Left lung (tissue), 14 donors: ENCODE measurements at regions of chr10 and their contacts with region 1.

Region 1: DNA sequence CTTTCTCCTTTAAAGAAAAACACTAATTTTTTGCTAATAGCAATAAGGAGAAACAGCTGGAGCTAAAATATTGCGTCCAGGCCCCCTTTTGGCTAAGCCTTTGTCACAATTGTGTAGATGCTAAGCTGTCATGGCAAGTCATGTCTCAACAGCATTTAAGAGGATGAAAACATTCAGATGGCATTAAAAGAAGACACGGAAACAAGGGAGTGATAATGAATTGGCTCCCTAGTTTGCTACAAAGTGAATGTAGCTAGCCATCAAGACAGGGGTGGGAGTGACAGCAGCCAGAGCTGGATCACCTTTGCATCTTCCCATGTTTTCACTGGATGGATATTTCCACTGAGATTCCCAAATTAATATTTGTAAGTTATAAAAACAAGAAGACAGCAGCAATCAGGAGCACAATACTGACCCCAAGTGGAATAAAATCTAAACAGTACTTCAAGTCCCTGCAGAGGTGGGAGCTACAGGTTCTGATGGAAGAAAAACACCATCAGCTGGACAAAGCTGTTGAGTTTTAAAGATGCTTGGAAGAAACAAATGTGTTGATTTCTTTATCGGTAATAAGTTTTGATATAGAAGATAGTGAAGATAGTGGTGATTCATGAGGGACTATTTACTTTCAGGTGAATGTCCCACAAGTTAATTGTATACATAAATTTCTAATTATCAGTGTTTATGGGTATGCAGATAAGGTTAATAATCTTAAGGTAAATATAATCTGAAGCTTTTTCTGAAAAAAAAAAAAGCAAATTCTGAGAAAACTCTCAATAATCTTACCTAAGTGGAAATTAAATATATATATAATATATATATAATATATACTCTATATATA is 129.4 kb downstream of the SLC16A9 start:
- DNase-seq: peak in 2 of 4 donors; percentile 68 to 71
- ATAC-seq: peak; percentile 52
- H3K4me3 ChIP-seq: no peak overlapping the region
- H3K27ac ChIP-seq: peak overlapping the region in 1 of 2 donors; percentile 5
- H3K4me1 ChIP-seq: no peaks in the 10 kb centered on the region
- H3K27me3 ChIP-seq: no peaks in the 10 kb centered on the region
- CTCF ChIP-seq: peak; percentile 29 to 31

Region 2: GRCh38 chr10:59240582-59241183 is 339.6 kb before region 1 on chr10:
- intact Hi-C with region 1: loop called in 1 of 2 experiments (anchors 10 kb)
- DNase-seq: peak in 2 of 4 donors; percentile 52 to 58
- ATAC-seq: peak; percentile 52
- H3K4me3 ChIP-seq: no peak overlapping the region
- H3K27ac ChIP-seq: no peak overlapping the region
- H3K4me1 ChIP-seq: no peaks in the 10 kb centered on the region
- H3K27me3 ChIP-seq: no peaks in the 10 kb centered on the region
- CTCF ChIP-seq: peak in 1 of 2 donors; percentile 52

Region 3: GRCh38 chr10:59499460-59499859 is 80.8 kb before region 1 on chr10:
- intact Hi-C with region 1: no loop called
- DNase-seq: no peak
- ATAC-seq: no peak
- H3K4me3 ChIP-seq: no peak overlapping the region
- H3K27ac ChIP-seq: no peak overlapping the region
- H3K4me1 ChIP-seq: no peaks in the 10 kb centered on the region
- H3K27me3 ChIP-seq: no peaks in the 10 kb centered on the region
- CTCF ChIP-seq: no peak